Dendritic cell treated with granulocyte-macrophage colony-stimulating factor and Interleukin-4, amounts not matched to agents 40 ng/mL and 50 ng/mL, for 4 days (primary cell): ENCODE measurements at regions of chr7 and their contacts with region 1.

Region 1: GRCh38 chr7:116024826-116025809 is 5.4 kb downstream of the TFEC start:
- H3K4me3 Mint-ChIP-seq: peak overlapping the region; percentile 88
- H3K27ac Mint-ChIP-seq: peak overlapping the region; percentile 89
- H3K4me1 Mint-ChIP-seq: peaks cover 69% of the 10 kb centered on the region
- H3K27me3 Mint-ChIP-seq: no peaks in the 10 kb centered on the region

Region 2: DNA sequence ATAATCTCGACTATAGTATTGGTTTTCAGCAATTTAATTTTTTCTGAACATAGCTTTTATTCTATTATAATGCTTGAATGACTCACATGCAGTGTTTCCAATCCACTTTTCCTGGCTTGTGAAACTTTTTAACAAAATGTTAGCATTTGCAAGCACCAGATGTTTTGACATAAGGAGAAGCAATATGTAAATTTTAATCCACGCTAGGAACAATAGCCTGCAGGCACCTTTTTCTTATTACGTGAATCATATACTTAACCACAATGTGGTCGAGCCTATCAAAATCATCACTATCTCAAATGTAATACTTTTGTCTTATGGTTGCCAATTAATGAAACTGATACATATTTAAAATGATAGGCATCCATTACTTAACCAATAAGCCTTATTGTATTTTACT is 91.6 kb before region 1 on chr7:
- intact Hi-C with region 1: loop called (anchors 10 kb)
- H3K4me3 Mint-ChIP-seq: no peak overlapping the region
- H3K27ac Mint-ChIP-seq: no peak overlapping the region
- H3K4me1 Mint-ChIP-seq: peaks cover 12% of the 10 kb centered on the region
- H3K27me3 Mint-ChIP-seq: no peaks in the 10 kb centered on the region

Region 3: GRCh38 chr7:115987486-115987885 is 37.6 kb before region 1 on chr7:
- intact Hi-C with region 1: loop called (anchors 5 kb)
- H3K4me3 Mint-ChIP-seq: no peak overlapping the region
- H3K27ac Mint-ChIP-seq: no peak overlapping the region
- H3K4me1 Mint-ChIP-seq: peaks cover 52% of the 10 kb centered on the region
- H3K27me3 Mint-ChIP-seq: no peaks in the 10 kb centered on the region